CD14-positive monocyte (primary cell): ENCODE measurements at regions of chr5 and their contacts with region 1.

Region 1: GRCh38 chr5:611721-612486 is at the start of gene CEP72:
- DNase-seq: peak; percentile 81 to 85 (median 84)
- H3K4me3 ChIP-seq: peak within 1 kb of the TSS; percentile 58 to 88 (median 85)
- H3K4me3 Mint-ChIP-seq: peak within 1 kb of the TSS; percentile 83 to 96
- H3K27ac ChIP-seq: peak within 1 kb of the TSS in 1 of 2 donors; percentile 50
- H3K27ac Mint-ChIP-seq: peak within 1 kb of the TSS in 3 of 7 donors; percentile 46 to 65 (median 53)
- H3K4me1 ChIP-seq: peaks cover 26 to 33% of the 10 kb centered on the region in 2 donors
- H3K4me1 Mint-ChIP-seq: peaks cover 34% of the 10 kb centered on the region
- H3K27me3 ChIP-seq: peaks cover 0 to 27% of the 10 kb centered on the region in 2 donors
- H3K27me3 Mint-ChIP-seq: peaks cover 27 to 35% (median 31%) of the 10 kb centered on the region in 3 donors
- CTCF ChIP-seq: no peak
- polyA plus RNA-seq, gene CEP72: 0.13 to 2.1 (median 0.24) TPM

Region 2: GRCh38 chr5:270340-270739 is 341.6 kb before region 1 on chr5:
- intact Hi-C with region 1: loop called (anchors 10 kb)
- DNase-seq: no peak
- H3K4me3 ChIP-seq: peak overlapping the region in 1 of 3 experiments; percentile 88
- H3K4me3 Mint-ChIP-seq: peak overlapping the region; percentile 94 to 99
- H3K27ac ChIP-seq: no peak overlapping the region
- H3K27ac Mint-ChIP-seq: peak overlapping the region in 4 of 7 donors; percentile 25 to 97 (median 75)
- H3K4me1 ChIP-seq: peaks cover 15% of the 10 kb centered on the region in 2 donors
- H3K4me1 Mint-ChIP-seq: peaks cover 16% of the 10 kb centered on the region
- H3K27me3 ChIP-seq: no peaks in the 10 kb centered on the region
- H3K27me3 Mint-ChIP-seq: peaks cover 0 to 2% (median 0%) of the 10 kb centered on the region in 3 donors
- CTCF ChIP-seq: no peak

Region 3: DNA sequence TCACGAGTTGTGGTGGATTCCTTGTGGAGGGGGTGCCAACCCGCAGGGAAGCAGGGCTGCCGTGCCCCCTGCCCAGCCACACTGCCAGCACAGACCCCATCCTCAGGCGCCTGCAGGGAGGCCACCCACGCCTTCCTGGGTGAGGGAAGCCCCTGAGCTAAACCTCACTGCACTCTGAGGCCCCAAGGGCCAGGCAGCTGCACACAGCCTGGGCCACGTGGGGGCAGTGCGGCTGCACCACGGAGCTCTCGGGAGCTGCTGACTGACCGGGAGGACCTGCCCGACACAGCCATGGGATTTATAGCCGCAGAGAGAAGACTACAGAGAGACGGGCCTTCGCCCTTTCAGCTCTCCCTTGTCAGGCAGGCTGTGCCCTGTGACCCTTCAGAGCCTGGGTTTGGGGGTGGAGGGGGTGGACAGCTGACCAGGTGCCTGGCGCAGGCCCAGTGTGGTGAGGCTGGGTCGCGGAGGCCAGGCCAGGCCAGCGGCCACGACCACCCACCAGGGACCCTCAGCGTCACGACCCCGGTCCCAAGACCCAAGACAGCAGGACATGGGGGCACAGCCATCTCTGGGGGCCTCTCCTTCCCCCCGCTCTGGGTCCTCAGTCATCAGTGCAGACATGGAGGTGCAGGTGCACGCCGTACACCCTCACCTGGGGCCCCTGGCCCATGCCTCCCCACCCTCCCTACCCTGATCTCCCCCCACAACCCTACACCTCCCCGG is 294.7 kb before region 1 on chr5:
- intact Hi-C with region 1: no loop called
- DNase-seq: peak in 2 of 3 donors; percentile 30 to 57
- H3K4me3 ChIP-seq: no peak overlapping the region
- H3K4me3 Mint-ChIP-seq: no peak overlapping the region
- H3K27ac ChIP-seq: no peak overlapping the region
- H3K27ac Mint-ChIP-seq: no peak overlapping the region
- H3K4me1 ChIP-seq: peaks cover 2 to 10% of the 10 kb centered on the region in 2 donors
- H3K4me1 Mint-ChIP-seq: peaks cover 5% of the 10 kb centered on the region
- H3K27me3 ChIP-seq: peaks cover 5 to 33% of the 10 kb centered on the region in 2 donors
- H3K27me3 Mint-ChIP-seq: peaks cover 26 to 37% (median 30%) of the 10 kb centered on the region in 3 donors
- CTCF ChIP-seq: no peak

Region 4: GRCh38 chr5:472656-473553 is 139.0 kb before region 1 on chr5:
- intact Hi-C with region 1: loop called (anchors 5 kb)
- DNase-seq: peak; percentile 76 to 87 (median 77)
- H3K4me3 ChIP-seq: peak overlapping the region; percentile 51 to 87 (median 59)
- H3K4me3 Mint-ChIP-seq: peak overlapping the region; percentile 70 to 72
- H3K27ac ChIP-seq: peak overlapping the region in 1 of 2 donors; percentile 61
- H3K27ac Mint-ChIP-seq: no peak overlapping the region
- H3K4me1 ChIP-seq: peaks cover 22 to 40% of the 10 kb centered on the region in 2 donors
- H3K4me1 Mint-ChIP-seq: peaks cover 18% of the 10 kb centered on the region
- H3K27me3 ChIP-seq: peaks cover 4 to 31% of the 10 kb centered on the region in 2 donors
- H3K27me3 Mint-ChIP-seq: peaks cover 32 to 44% (median 43%) of the 10 kb centered on the region in 3 donors
- CTCF ChIP-seq: no peak

Region 5: DNA sequence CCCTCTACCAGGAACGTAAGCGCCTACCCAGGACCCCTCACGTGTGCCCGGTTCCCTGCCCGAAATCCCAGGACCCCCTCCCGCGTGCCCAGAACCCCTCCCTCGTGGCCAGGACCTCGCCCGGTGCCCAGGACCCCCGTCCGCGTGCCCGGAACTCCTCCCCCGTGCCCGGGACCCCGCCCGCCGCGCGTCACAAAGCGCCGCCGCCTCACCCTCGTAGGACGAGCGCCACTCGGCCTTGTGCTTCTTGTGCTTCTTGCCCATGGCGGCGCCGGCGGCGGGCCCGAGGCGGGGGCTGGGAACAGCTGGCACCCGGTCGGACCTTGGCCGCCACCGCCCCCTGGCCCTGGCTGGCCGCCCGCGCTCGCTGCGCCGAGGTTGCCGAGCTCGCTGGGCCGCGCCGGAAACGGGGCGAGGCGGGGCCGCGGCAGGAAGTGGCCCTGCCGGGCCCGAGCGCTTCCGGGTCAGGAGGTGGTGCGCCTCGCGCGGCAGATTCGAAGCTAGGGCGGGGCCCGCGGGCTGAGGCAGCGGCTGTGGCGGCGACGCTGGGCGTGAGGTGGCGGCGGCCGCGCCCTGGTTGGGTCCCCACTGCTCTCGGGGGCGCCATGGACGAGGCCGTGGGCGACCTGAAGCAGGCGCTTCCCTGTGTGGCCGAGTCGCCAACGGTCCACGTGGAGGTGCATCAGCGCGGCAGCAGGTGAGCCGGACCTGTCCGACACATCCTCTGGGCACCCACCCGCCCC is 280.7 kb after region 1 on chr5 and contains the starts of genes BRD9 and TRIP13:
- intact Hi-C with region 1: loop called in 1 of 2 experiments (anchors 5 kb)
- DNase-seq: peak; percentile 73 to 79 (median 76)
- H3K4me3 ChIP-seq: peak within 1 kb of the TSS; percentile 73 to 88 (median 76)
- H3K4me3 Mint-ChIP-seq: peak within 1 kb of the TSS; percentile 89 to 93
- H3K27ac ChIP-seq: peak within 1 kb of the TSS; percentile 10 to 90
- H3K27ac Mint-ChIP-seq: peak within 1 kb of the TSS; percentile 87 to 96 (median 90)
- H3K4me1 ChIP-seq: peaks cover 22 to 28% of the 10 kb centered on the region in 2 donors
- H3K4me1 Mint-ChIP-seq: peaks cover 19% of the 10 kb centered on the region
- H3K27me3 ChIP-seq: no peaks in the 10 kb centered on the region
- H3K27me3 Mint-ChIP-seq: peaks cover 0 to 2% (median 0%) of the 10 kb centered on the region in 3 donors
- CTCF ChIP-seq: no peak
- polyA plus RNA-seq, gene BRD9: 5.3 to 22.7 (median 9.3) TPM
- polyA plus RNA-seq, gene TRIP13: 0.24 to 1.2 TPM in 2 of 3 donors, not detected in the other